Posterior vena cava (tissue), 2 donors: ENCODE measurements at regions of chr7 and their contacts with region 1.

Region 1: GRCh38 chr7:93165447-93165846 is 17.3 kb upstream of the SAMD9L start:
- DNase-seq: no peak

Region 2: DNA sequence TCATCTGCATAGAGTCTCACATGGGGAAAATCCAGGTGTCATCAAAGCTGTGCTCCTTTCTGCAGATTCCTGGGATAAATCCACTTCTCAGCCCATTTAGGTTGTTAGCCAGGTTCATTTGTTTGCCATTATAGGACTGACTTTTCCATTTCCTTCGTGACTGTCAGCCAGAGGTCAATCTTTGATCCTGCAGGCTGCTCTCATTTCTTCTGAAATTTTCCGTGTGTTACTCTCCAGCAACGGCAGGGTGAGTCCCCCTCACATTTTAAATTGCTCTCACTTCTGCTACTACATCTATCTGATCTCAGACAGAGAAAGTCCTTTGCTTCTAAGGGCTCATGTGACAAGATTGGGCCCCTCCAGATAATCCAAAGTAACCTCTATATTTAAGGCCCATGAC is 989.4 kb after region 1 on chr7:
- intact Hi-C with region 1: loop called in 1 of 2 experiments (anchors 5 kb)
- DNase-seq: no peak